CD4-positive, alpha-beta memory T cell (primary cell): ENCODE measurements at regions of chr11 and their contacts with region 1.

Region 1: GRCh38 chr11:124875943-124876817 is 10.9 kb downstream of the ROBO3 start:
- DNase-seq: peak; percentile 77 to 84 (median 79)
- H3K4me3 ChIP-seq: peak overlapping the region; percentile 11 to 58
- H3K4me3 Mint-ChIP-seq: peak overlapping the region; percentile 86 to 91 (median 90)
- H3K27ac ChIP-seq: peak overlapping the region; percentile 53
- H3K27ac Mint-ChIP-seq: peak overlapping the region; percentile 79 to 96 (median 90)
- H3K4me1 ChIP-seq: peaks cover 13% of the 10 kb centered on the region
- H3K4me1 Mint-ChIP-seq: peaks cover 4 to 29% (median 19%) of the 10 kb centered on the region in 4 donors
- H3K27me3 ChIP-seq: no peaks in the 10 kb centered on the region
- H3K27me3 Mint-ChIP-seq: peaks cover 18 to 25% of the 10 kb centered on the region in 2 donors

Region 2: GRCh38 chr11:124543145-124543544 is 333.0 kb before region 1 on chr11:
- CTCF ChIA-PET with region 1: no interaction called
- POLR2A ChIA-PET with region 1: no interaction called
- intact Hi-C with region 1: no loop called
- DNase-seq: no peak
- H3K4me3 ChIP-seq: no peak overlapping the region
- H3K4me3 Mint-ChIP-seq: no peak overlapping the region
- H3K27ac ChIP-seq: no peak overlapping the region
- H3K27ac Mint-ChIP-seq: no peak overlapping the region
- H3K4me1 ChIP-seq: no peaks in the 10 kb centered on the region
- H3K4me1 Mint-ChIP-seq: peaks cover 0 to 1% (median 0%) of the 10 kb centered on the region in 4 donors
- H3K27me3 ChIP-seq: no peaks in the 10 kb centered on the region
- H3K27me3 Mint-ChIP-seq: peaks cover 14 to 17% of the 10 kb centered on the region in 2 donors

Region 3: GRCh38 chr11:124673333-124674167 is 202.6 kb before region 1 on chr11 and contains the starts of genes SIAE and SPA17:
- CTCF ChIA-PET with region 1: interaction called, 13 read pairs
- POLR2A ChIA-PET with region 1: interaction called, 3 read pairs
- intact Hi-C with region 1: no loop called
- DNase-seq: peak; percentile 84 to 91 (median 88)
- H3K4me3 ChIP-seq: peak within 1 kb of the TSS; percentile 39 to 73
- H3K4me3 Mint-ChIP-seq: peak within 1 kb of the TSS; percentile 90 to 95 (median 91)
- H3K27ac ChIP-seq: peak within 1 kb of the TSS; percentile 66
- H3K27ac Mint-ChIP-seq: peak within 1 kb of the TSS; percentile 98 to 99 (median 99)
- H3K4me1 ChIP-seq: peaks cover 42% of the 10 kb centered on the region
- H3K4me1 Mint-ChIP-seq: peaks cover 16 to 43% (median 32%) of the 10 kb centered on the region in 4 donors
- H3K27me3 ChIP-seq: peaks cover 5% of the 10 kb centered on the region
- H3K27me3 Mint-ChIP-seq: no peaks in the 10 kb centered on the region
- total RNA-seq, gene SIAE: 4.2 to 4.8 TPM
- total RNA-seq, gene SPA17: 0.55 to 0.81 TPM

Region 4: DNA sequence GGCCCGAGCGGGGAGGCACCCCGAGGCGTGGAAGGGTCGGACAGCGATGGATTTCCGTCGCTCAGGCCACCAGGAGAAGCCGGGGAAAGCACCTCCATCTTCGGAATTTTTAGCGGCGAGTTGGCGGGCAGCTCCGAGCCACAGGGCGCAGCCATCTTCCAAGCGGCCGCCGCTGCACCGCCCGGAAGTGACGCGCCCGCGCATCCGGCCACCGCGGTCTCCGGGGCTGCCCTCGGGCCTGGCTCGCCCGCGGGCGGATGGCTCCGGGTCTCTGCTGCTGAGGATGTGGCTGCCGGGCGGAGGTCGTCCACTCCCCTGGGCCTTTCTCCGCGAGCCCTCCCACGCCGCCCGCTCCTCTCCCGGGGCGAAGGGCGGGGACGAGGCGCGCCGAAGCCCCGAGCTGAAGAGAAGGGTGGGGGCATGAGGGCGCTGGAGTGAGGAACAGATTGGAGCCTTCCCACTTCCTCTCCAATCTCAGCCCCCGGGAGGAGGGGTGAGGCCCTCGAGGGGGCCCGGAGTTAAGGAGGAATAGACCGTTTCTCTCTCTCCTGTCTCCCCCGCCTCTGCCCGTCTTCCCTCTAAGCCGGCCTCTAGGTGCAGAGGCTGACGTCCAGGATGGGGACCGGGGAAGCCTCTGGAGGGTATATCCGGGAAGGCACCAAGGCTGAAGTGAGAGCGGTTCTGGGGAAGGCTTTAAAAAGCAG is 75.8 kb before region 1 on chr11 and contains the start of gene MSANTD2:
- CTCF ChIA-PET with region 1: interaction called, 5 read pairs
- POLR2A ChIA-PET with region 1: interaction called, 6 read pairs
- intact Hi-C with region 1: loop called (anchors 1 kb)
- DNase-seq: peak; percentile 77 to 84 (median 79)
- H3K4me3 ChIP-seq: peak within 1 kb of the TSS; percentile 66 to 93
- H3K4me3 Mint-ChIP-seq: peak within 1 kb of the TSS; percentile 93 to 98 (median 96)
- H3K27ac ChIP-seq: peak within 1 kb of the TSS; percentile 78
- H3K27ac Mint-ChIP-seq: peak within 1 kb of the TSS; percentile 90 to 98 (median 97)
- H3K4me1 ChIP-seq: peaks cover 28% of the 10 kb centered on the region
- H3K4me1 Mint-ChIP-seq: peaks cover 18 to 40% (median 26%) of the 10 kb centered on the region in 4 donors
- H3K27me3 ChIP-seq: no peaks in the 10 kb centered on the region
- H3K27me3 Mint-ChIP-seq: peaks cover 0 to 2% of the 10 kb centered on the region in 2 donors
- total RNA-seq, gene MSANTD2: 25.9 to 26.3 TPM

Region 5: GRCh38 chr11:124859171-124859570 is 17.0 kb before region 1 on chr11:
- CTCF ChIA-PET with region 1: interaction called, 10 read pairs
- POLR2A ChIA-PET with region 1: interaction called, 3 read pairs
- intact Hi-C with region 1: no loop called
- DNase-seq: no peak
- H3K4me3 ChIP-seq: no peak overlapping the region
- H3K4me3 Mint-ChIP-seq: no peak overlapping the region
- H3K27ac ChIP-seq: no peak overlapping the region
- H3K27ac Mint-ChIP-seq: no peak overlapping the region
- H3K4me1 ChIP-seq: peaks cover 3% of the 10 kb centered on the region
- H3K4me1 Mint-ChIP-seq: peaks cover 6 to 16% (median 11%) of the 10 kb centered on the region in 4 donors
- H3K27me3 ChIP-seq: peaks cover 21% of the 10 kb centered on the region
- H3K27me3 Mint-ChIP-seq: peaks cover 27 to 28% of the 10 kb centered on the region in 2 donors

Region 6: DNA sequence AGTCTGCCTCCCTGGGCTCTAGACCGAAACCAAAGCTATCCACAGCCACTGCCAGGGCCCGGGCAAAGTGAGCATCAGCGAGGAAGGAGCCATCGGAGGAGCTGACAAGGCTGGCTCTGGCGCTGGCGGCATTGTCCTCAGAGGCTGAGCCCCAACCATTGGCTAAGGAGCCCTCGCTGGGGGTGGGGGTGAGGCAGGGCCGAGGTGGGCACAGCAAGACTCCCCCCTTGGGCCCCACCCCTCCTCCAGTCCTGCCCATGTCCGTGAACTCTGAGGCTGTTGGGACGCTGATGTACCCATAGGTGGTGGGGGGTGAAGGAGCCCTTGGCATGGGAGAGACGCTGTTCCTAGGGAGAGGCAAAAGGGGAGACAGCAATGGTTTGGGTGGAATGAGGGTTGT is 10.3 kb after region 1 on chr11:
- CTCF ChIA-PET with region 1: interaction called, 22 read pairs
- POLR2A ChIA-PET with region 1: no interaction called
- intact Hi-C with region 1: no loop called
- DNase-seq: no peak
- H3K4me3 ChIP-seq: no peak overlapping the region
- H3K4me3 Mint-ChIP-seq: no peak overlapping the region
- H3K27ac ChIP-seq: no peak overlapping the region
- H3K27ac Mint-ChIP-seq: no peak overlapping the region
- H3K4me1 ChIP-seq: no peaks in the 10 kb centered on the region
- H3K4me1 Mint-ChIP-seq: no peaks in the 10 kb centered on the region
- H3K27me3 ChIP-seq: no peaks in the 10 kb centered on the region
- H3K27me3 Mint-ChIP-seq: peaks cover 1 to 8% of the 10 kb centered on the region in 2 donors

Region 7: GRCh38 chr11:125036933-125037332 is 160.8 kb after region 1 on chr11:
- CTCF ChIA-PET with region 1: no interaction called
- POLR2A ChIA-PET with region 1: no interaction called
- intact Hi-C with region 1: no loop called
- DNase-seq: no peak
- H3K4me3 ChIP-seq: no peak overlapping the region
- H3K4me3 Mint-ChIP-seq: no peak overlapping the region
- H3K27ac ChIP-seq: no peak overlapping the region
- H3K27ac Mint-ChIP-seq: peak overlapping the region in 1 of 7 donors; percentile 23
- H3K4me1 ChIP-seq: no peaks in the 10 kb centered on the region
- H3K4me1 Mint-ChIP-seq: no peaks in the 10 kb centered on the region
- H3K27me3 ChIP-seq: no peaks in the 10 kb centered on the region
- H3K27me3 Mint-ChIP-seq: no peaks in the 10 kb centered on the region

Region 8: GRCh38 chr11:125111343-125112207 is 235.4 kb after region 1 on chr11 and contains the start of gene TMEM218:
- CTCF ChIA-PET with region 1: interaction called, 3 read pairs
- POLR2A ChIA-PET with region 1: interaction called, 11 read pairs
- intact Hi-C with region 1: loop called (anchors 1 kb)
- DNase-seq: peak; percentile 94 to 97 (median 96)
- H3K4me3 ChIP-seq: peak within 1 kb of the TSS; percentile 72 to 89
- H3K4me3 Mint-ChIP-seq: peak within 1 kb of the TSS; percentile 92 to 100 (median 98)
- H3K27ac ChIP-seq: peak within 1 kb of the TSS; percentile 68
- H3K27ac Mint-ChIP-seq: peak within 1 kb of the TSS; percentile 74 to 99 (median 97)
- H3K4me1 ChIP-seq: peaks cover 18% of the 10 kb centered on the region
- H3K4me1 Mint-ChIP-seq: peaks cover 4 to 25% (median 18%) of the 10 kb centered on the region in 4 donors
- H3K27me3 ChIP-seq: no peaks in the 10 kb centered on the region
- H3K27me3 Mint-ChIP-seq: no peaks in the 10 kb centered on the region
- total RNA-seq, gene TMEM218: 15.1 to 16.6 TPM

Region 9: DNA sequence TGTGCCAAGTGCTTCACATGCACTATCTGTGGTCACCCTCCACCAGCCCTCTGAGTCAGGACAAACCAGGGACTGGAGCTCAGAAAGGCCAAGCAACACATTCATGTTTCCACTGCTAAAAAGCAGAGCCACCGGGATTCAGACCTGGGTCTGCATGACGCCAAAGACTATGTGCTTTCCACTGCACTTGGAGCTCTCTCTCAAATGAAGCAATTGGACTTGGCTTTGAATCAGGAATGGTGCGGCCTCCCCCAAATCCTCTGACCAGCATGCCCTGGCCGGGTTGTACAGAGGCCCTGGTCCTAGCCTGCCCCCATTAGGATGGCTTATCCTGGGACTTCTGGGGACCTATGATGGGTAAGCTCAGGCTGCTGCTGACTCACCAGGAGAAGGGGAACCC is 369.1 kb after region 1 on chr11:
- CTCF ChIA-PET with region 1: no interaction called
- POLR2A ChIA-PET with region 1: no interaction called
- intact Hi-C with region 1: no loop called
- DNase-seq: no peak
- H3K4me3 ChIP-seq: no peak overlapping the region
- H3K4me3 Mint-ChIP-seq: no peak overlapping the region
- H3K27ac ChIP-seq: no peak overlapping the region
- H3K27ac Mint-ChIP-seq: no peak overlapping the region
- H3K4me1 ChIP-seq: no peaks in the 10 kb centered on the region
- H3K4me1 Mint-ChIP-seq: no peaks in the 10 kb centered on the region
- H3K27me3 ChIP-seq: peaks cover under 1% of the 10 kb centered on the region
- H3K27me3 Mint-ChIP-seq: peaks cover 2 to 7% of the 10 kb centered on the region in 2 donors